CD4-positive, alpha-beta T cell (primary cell): ENCODE measurements at regions of chr1 and their contacts with region 1.

Region 1: DNA sequence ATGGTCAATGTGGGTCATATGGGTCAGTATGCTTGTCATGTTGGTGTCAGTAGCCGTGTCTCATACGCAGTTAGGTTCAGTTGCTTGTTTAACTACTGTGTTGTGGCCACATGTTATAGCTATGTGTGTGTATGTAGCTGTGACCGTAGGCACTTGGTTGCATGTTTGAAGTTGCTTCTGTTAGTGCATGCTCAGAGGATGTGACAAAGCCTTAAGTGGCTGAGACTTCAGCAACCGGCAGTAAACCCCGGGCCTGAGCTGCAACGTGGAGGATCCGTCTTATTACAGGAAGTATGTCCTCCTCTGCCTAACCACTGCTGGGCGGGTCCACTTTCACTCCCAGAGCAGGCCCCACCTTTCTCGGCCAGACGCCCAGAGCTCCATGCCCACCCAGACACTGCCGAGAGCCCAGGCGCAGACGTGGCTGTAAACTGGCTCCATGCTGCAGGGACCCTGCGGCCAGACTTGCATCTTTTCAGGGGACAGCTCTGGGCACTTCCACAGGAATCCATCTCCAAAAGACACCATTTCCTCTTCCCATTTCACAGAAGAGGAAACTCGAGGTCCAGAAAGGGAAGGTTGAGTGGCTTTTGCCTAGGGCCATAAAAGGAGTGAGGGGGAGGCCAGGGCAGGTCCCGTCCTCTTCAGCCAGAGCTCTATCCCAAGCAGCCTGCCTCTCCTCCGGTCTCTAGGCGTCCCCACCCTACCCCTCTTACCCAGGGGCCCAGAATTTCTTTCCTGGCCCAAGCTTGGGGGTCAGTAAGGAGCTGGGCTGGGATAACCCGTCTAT is 2.1 kb downstream of the TCEA3 start:
- DNase-seq: peak in 13 of 14 experiments; percentile 14 to 80 (median 55)
- ATAC-seq: peak; percentile 76
- H3K4me3 ChIP-seq: peak overlapping the region; percentile 19
- H3K4me3 Mint-ChIP-seq: peak overlapping the region; percentile 86
- H3K27ac ChIP-seq: peak overlapping the region; percentile 10 to 16
- H3K27ac Mint-ChIP-seq: peak overlapping the region; percentile 78
- H3K4me1 ChIP-seq: peaks cover 37% of the 10 kb centered on the region
- H3K4me1 Mint-ChIP-seq: peaks cover 30% of the 10 kb centered on the region
- H3K27me3 ChIP-seq: peaks cover 0 to 7% of the 10 kb centered on the region in 2 experiments
- H3K27me3 Mint-ChIP-seq: no peaks in the 10 kb centered on the region
- CTCF ChIP-seq: no peak

Region 2: DNA sequence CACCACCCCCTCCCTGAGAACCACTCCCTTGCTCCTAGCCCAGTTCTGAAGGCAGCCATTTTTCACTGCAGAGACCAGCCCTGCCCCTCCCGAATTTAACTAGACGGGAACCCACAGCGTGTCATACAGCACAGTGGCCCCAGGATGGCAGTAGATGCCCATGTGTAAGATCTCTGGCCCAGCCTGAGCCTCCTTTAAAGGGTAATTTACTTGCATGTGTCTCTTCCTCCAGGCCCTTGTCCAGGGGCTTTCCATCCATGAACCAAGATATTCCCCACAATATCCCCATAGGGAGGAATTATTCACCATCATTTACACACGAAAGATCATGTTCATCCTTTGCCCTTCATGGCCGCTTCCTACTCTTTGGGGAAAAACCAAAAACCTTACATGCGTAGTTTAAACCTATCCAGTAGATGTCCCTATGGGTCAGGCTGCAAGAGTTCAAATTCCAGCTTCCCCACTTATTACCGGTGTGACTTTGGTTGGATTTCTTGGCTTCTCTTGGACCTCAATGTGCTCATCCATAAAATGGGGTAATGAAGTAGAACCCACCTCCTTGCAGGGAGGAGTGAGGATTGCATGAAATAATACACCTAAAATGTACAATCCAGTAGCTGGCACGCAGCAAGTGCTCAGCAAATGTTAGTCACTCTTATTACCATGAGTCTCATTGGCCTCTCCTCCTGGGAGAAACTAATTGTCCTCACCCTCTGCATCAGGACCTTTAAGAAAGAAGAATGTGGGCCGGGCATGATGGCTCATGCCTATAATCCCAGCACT is 445.8 kb before region 1 on chr1:
- CTCF ChIA-PET with region 1: no interaction called
- POLR2A ChIA-PET with region 1: no interaction called
- intact Hi-C with region 1: no loop called
- DNase-seq: peak; percentile 9 to 72 (median 29)
- ATAC-seq: peak; percentile 83
- H3K4me3 ChIP-seq: no peak overlapping the region
- H3K4me3 Mint-ChIP-seq: no peak overlapping the region
- H3K27ac ChIP-seq: no peak overlapping the region
- H3K27ac Mint-ChIP-seq: no peak overlapping the region
- H3K4me1 ChIP-seq: no peaks in the 10 kb centered on the region
- H3K4me1 Mint-ChIP-seq: no peaks in the 10 kb centered on the region
- H3K27me3 ChIP-seq: peaks cover 7% of the 10 kb centered on the region in 2 experiments
- H3K27me3 Mint-ChIP-seq: peaks cover 39% of the 10 kb centered on the region
- CTCF ChIP-seq: peak; percentile 11

Region 3: GRCh38 chr1:23224714-23225648 is 197.5 kb before region 1 on chr1:
- CTCF ChIA-PET with region 1: no interaction called
- POLR2A ChIA-PET with region 1: no interaction called
- intact Hi-C with region 1: no loop called
- DNase-seq: no peak
- ATAC-seq: no peak
- H3K4me3 ChIP-seq: no peak overlapping the region
- H3K4me3 Mint-ChIP-seq: no peak overlapping the region
- H3K27ac ChIP-seq: no peak overlapping the region
- H3K27ac Mint-ChIP-seq: no peak overlapping the region
- H3K4me1 ChIP-seq: no peaks in the 10 kb centered on the region
- H3K4me1 Mint-ChIP-seq: no peaks in the 10 kb centered on the region
- H3K27me3 ChIP-seq: peaks cover 2 to 15% of the 10 kb centered on the region in 2 experiments
- H3K27me3 Mint-ChIP-seq: peaks cover 45% of the 10 kb centered on the region
- CTCF ChIP-seq: no peak

Region 4: GRCh38 chr1:23344111-23344986 is 78.1 kb before region 1 on chr1 and contains the start of gene HNRNPR:
- CTCF ChIA-PET with region 1: no interaction called
- POLR2A ChIA-PET with region 1: interaction called, 33 read pairs
- intact Hi-C with region 1: no loop called
- DNase-seq: peak; percentile 96 to 100 (median 99)
- ATAC-seq: peak; percentile 96
- H3K4me3 ChIP-seq: peak within 1 kb of the TSS; percentile 73
- H3K4me3 Mint-ChIP-seq: peak within 1 kb of the TSS; percentile 96
- H3K27ac ChIP-seq: peak within 1 kb of the TSS; percentile 69 to 70
- H3K27ac Mint-ChIP-seq: peak within 1 kb of the TSS; percentile 92
- H3K4me1 ChIP-seq: peaks cover 8% of the 10 kb centered on the region
- H3K4me1 Mint-ChIP-seq: peaks cover 43% of the 10 kb centered on the region
- H3K27me3 ChIP-seq: no peaks in the 10 kb centered on the region
- H3K27me3 Mint-ChIP-seq: no peaks in the 10 kb centered on the region
- CTCF ChIP-seq: peak; percentile 11
- total RNA-seq, gene HNRNPR: 92.0 to 93.3 TPM

Region 5: DNA sequence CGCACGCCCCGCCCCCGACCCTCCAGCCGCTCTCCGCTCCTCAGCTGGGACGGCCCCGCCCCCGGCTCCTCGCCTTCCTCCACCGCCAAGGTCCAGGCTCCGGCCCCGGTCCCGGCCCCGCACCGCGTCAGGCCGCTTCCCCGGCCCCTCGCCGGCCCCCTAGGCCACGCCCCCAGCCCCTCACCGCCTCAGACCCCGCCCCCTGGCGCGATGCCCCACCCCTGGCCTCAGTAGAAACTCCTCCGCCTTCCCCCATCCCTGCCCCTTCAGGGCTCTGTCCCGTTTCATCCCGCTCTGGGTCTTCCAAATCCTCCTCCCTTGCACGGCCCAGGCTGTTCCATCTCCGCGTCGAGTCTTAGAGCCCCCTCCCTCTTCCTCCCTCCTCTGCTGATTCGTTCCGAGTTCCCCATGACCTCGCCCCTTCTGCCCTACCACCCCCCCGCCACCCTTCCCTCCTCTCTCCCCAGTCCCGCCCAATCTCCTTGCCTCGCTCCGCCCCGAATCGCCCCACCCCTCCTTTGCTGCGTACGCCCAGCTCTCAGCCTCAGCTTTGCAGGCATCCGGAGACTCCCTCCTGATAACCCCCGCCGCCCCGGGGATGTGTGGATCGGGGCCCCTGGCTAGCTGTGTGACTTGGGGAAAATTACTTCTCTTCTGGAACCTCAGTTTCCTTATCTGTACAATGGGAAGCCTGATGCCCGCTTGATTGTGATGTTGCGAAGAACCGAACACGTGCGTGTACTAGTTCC is 62.0 kb after region 1 on chr1:
- CTCF ChIA-PET with region 1: no interaction called
- POLR2A ChIA-PET with region 1: interaction called, 11 read pairs
- intact Hi-C with region 1: loop called (anchors 5 to 10 kb)
- DNase-seq: peak; percentile 85 to 96 (median 92)
- ATAC-seq: peak; percentile 93
- H3K4me3 ChIP-seq: peak overlapping the region; percentile 55
- H3K4me3 Mint-ChIP-seq: peak overlapping the region; percentile 92
- H3K27ac ChIP-seq: no peak overlapping the region
- H3K27ac Mint-ChIP-seq: peak overlapping the region; percentile 55
- H3K4me1 ChIP-seq: peaks cover 17% of the 10 kb centered on the region
- H3K4me1 Mint-ChIP-seq: peaks cover 19% of the 10 kb centered on the region
- H3K27me3 ChIP-seq: peaks cover 17 to 24% of the 10 kb centered on the region in 2 experiments
- H3K27me3 Mint-ChIP-seq: peaks cover 28% of the 10 kb centered on the region
- CTCF ChIP-seq: no peak

Region 6: DNA sequence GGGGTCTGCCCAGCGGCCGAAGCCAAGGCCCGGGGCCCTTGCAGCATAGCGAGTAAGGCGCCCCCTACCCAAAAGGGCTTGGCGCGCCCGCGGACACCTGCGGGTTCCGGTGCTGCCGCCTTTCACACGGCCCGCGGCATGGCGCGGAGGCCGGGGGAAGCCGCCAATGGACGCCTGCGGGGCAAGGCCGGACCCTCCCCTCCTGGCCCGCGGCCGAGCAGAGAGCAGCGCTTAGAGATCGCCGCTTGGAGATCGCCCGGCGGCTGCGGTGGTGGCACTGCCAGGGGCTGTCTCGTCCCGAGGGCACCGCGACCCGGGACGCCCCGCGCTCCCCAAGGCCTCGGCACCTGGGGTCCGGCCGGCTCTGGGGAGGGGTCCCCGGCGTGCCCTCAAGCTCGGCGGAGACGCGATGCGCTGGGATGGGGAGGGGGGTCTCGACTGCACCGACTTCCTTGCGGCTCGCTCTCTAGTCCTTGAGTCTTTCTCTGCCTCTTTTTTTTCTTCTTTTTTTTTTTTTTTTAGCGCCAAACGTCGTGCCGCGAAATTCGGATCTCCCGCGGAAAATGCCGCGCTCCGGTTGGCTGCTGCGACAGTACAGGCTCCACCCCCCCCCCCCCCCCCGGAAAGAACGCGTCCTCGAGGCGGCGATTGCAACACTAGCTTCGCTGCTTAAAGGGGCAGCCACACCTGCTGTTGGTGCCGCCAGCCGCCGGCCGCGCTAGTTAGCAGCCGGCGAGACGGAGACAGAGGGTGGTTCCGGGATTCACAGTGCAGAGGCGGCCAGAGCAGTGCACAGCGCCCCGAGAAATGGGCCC is 108.5 kb after region 1 on chr1 and contains the start of gene E2F2:
- CTCF ChIA-PET with region 1: no interaction called
- POLR2A ChIA-PET with region 1: interaction called, 5 read pairs
- intact Hi-C with region 1: loop called in 1 of 2 experiments (anchors 5 kb)
- DNase-seq: peak; percentile 66 to 92 (median 80)
- ATAC-seq: peak; percentile 79
- H3K4me3 ChIP-seq: peak within 1 kb of the TSS; percentile 44
- H3K4me3 Mint-ChIP-seq: peak within 1 kb of the TSS; percentile 91
- H3K27ac ChIP-seq: peak within 1 kb of the TSS in 1 of 2 donors; percentile 58
- H3K27ac Mint-ChIP-seq: peak within 1 kb of the TSS; percentile 84
- H3K4me1 ChIP-seq: peaks cover 78% of the 10 kb centered on the region
- H3K4me1 Mint-ChIP-seq: peaks cover 80% of the 10 kb centered on the region
- H3K27me3 ChIP-seq: no peaks in the 10 kb centered on the region
- H3K27me3 Mint-ChIP-seq: no peaks in the 10 kb centered on the region
- CTCF ChIP-seq: no peak
- total RNA-seq, gene E2F2: 0.50 to 0.69 TPM